ENCODE measurements at regions of chr10 and their contacts with region 1.

Region 1: DNA sequence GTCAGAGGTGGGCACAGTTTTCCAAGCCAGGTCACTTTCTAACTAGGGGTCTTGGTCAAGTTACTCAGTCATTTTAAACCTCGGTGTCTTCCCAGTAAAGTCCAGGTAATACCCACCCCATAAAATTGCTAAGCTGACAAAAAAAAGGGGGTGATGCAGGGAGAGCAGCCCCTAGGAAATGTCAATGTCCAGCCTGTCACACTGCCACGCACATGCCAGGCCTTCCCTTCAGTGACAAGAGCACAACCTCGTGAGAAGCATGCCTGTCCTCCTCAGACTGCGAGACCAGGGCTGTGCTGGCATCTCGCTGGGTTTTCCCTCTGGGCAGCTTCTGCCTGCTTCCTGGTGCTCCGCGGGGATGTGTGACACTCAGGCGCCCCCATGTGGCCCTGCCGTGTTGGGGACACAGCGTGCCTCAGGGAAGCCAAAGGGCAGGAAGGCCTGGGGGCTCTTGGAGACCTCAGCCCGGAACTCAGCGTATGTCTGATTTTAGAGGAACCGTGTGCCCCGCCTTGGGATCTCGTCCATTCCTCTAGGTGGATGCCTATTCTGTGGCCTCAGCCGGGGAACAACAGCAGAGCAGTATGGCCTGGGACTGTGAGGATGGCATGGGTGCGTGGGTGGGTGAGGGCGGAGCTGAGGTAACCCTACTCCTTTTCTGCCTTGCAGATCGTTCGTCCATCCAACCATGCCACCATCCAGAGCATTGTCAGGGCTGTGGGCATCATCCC is 10.2 kb upstream of the GDF2 start:
- DNase-seq: peak; percentile 66
- H3K4me3 Mint-ChIP-seq: no peak overlapping the region
- H3K27ac Mint-ChIP-seq: no peak overlapping the region
- H3K4me1 Mint-ChIP-seq: peaks cover 12% of the 10 kb centered on the region
- H3K27me3 Mint-ChIP-seq: peaks cover 2% of the 10 kb centered on the region

Region 2: DNA sequence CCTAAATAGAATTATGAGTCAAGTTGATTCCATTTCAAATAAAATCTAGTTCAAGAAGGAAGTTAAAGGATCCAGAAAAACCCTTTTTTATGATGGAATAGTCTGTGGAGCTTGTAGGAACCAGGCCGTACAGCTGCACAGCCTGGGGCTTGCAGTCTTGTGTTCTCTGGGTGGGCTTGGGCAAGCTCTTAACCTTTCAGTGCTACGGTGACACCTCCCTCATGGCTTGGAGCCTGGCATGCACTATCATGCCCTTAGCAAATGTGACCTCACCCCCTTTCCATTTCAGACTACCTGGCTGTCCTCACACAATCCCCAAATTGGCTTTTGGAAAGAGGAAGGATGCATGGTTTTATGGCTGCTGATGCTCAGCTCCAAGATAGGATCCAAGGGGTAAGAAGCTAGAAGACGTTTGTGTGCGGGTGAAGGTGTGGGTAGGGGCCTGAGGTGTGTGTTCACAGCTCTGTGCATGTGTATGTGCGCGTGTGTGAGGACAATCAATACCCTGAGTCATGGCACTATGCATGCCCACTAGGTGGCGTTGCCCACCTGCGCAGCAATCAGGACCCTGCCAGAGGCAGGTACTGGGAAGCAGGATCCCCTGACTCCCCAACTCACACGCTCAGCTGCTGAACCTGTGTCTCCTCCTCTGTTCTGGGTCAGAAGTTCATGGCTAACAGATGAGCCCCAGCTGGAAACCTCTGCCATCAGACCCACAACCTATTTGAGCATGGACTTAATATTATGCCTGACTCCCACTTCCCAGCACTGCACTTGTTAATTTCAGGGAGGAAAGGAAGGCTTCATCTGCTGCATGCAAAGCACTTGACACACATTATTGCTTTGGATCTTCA is 287.5 kb before region 1 on chr10:
- intact Hi-C with region 1: loop called (anchors 1 kb)
- DNase-seq: peak; percentile 41
- H3K4me3 Mint-ChIP-seq: no peak overlapping the region
- H3K27ac Mint-ChIP-seq: no peak overlapping the region
- H3K4me1 Mint-ChIP-seq: no peaks in the 10 kb centered on the region
- H3K27me3 Mint-ChIP-seq: peaks cover 3% of the 10 kb centered on the region

Region 3: GRCh38 chr10:47047671-47048525 is 264.2 kb before region 1 on chr10:
- intact Hi-C with region 1: loop called (anchors 1 kb)
- DNase-seq: peak; percentile 54
- H3K4me3 Mint-ChIP-seq: no peak overlapping the region
- H3K27ac Mint-ChIP-seq: no peak overlapping the region
- H3K4me1 Mint-ChIP-seq: peaks cover 4% of the 10 kb centered on the region
- H3K27me3 Mint-ChIP-seq: peaks cover 2% of the 10 kb centered on the region

Region 4: GRCh38 chr10:47152861-47153349 is 159.2 kb before region 1 on chr10:
- intact Hi-C with region 1: loop called (anchors 5 kb)
- DNase-seq: no peak
- H3K4me3 Mint-ChIP-seq: no peak overlapping the region
- H3K27ac Mint-ChIP-seq: no peak overlapping the region
- H3K4me1 Mint-ChIP-seq: peaks cover 5% of the 10 kb centered on the region
- H3K27me3 Mint-ChIP-seq: peaks cover 6% of the 10 kb centered on the region

Region 5: GRCh38 chr10:47176903-47177868 is 134.9 kb before region 1 on chr10:
- intact Hi-C with region 1: loop called (anchors 5 kb)
- DNase-seq: no peak
- H3K4me3 Mint-ChIP-seq: no peak overlapping the region
- H3K27ac Mint-ChIP-seq: no peak overlapping the region
- H3K4me1 Mint-ChIP-seq: no peaks in the 10 kb centered on the region
- H3K27me3 Mint-ChIP-seq: no peaks in the 10 kb centered on the region

Region 6: DNA sequence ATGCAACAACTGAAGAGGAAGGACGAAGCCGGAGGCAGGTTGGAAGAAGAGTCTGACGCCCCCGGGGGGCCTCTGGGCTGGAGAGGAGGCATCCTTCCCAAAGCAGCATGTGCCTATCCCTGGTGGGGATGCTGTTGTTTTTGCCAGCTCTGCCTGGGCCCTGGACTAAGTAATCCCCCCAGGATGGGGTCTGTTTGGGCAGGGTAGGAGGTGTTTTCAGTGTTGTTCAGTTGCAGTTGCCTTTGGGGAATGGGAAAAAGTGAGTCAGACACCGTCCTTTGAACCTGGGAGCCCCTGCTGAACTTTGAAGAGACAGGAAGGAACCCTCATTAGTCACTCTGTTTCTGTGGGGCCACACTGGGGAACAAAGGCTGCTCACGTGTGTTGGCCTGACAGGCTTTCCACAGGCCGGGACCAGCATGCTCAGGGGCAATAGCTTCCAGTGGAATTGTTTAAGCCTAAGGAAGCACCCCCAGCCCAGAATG is 47.3 kb before region 1 on chr10:
- intact Hi-C with region 1: loop called (anchors 2 kb)
- DNase-seq: peak; percentile 23
- H3K4me3 Mint-ChIP-seq: no peak overlapping the region
- H3K27ac Mint-ChIP-seq: peak overlapping the region; percentile 83
- H3K4me1 Mint-ChIP-seq: peaks cover 52% of the 10 kb centered on the region
- H3K27me3 Mint-ChIP-seq: no peaks in the 10 kb centered on the region

Measured in activated T-helper 1 cell treated with anti-CD3 and anti-CD28 coated beads, Interleukin-12 subunit alpha, Interleukin-12 subunit beta, Interleukin-2, Interleukin-4 antibody, amounts not matched to agents 30 ng/mL and 10 ng/mL and 1 ng/mL, durations not matched to agents 14 hours and 24 hours and 36 hours (primary cell).